IMR-90 (cell line): ENCODE measurements at regions of chr4 and their contacts with region 1.

Region 1: DNA sequence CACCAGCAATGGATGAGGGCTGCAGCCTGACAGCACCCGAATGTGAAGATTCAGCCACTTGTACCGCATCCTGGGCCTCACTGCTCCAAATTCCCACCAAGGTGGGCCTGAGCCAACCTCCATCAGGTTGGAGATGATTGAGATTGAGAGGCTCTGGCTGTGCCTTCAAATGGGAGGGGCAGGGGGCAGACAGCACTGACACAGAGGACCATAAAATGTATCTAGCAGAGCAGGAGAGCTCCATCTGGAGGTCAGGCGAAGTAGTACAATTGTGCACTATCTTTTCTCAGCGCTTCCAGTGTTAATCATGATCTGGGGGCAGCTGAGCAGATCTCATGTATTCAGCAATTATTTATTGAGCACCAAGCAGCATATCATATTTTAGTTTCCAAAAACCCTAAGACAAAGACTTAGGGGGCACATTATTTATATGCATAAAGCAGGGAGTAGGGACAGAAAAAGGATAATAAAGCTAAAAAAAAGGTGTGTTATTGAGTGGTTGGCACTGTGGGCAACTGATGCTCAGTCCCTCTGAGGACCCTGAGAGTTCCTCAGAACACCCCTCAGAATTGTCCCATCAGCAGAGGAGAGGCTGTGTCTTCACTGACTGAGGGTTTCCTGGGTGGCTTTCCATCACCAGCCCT is 31.6 kb upstream of the C1QTNF7 start:
- DNase-seq: peak; percentile 48
- ATAC-seq: peak; percentile 46; the same call in 1 of the 2 replicates
- H3K4me3 ChIP-seq: no peak overlapping the region
- H3K27ac ChIP-seq: no peak overlapping the region
- H3K4me1 ChIP-seq: peaks cover 14% of the 10 kb centered on the region
- H3K27me3 ChIP-seq: peaks cover 7% of the 10 kb centered on the region
- CTCF ChIP-seq: peak; percentile 62
- POLR2A ChIP-seq: no peak
- RAD21 ChIP-seq: peak; percentile 65

Region 2: GRCh38 chr4:15238720-15239119 is 157.6 kb before region 1 on chr4:
- CTCF ChIA-PET with region 1: interaction called, 3 read pairs
- POLR2A ChIA-PET with region 1: no interaction called
- dilution Hi-C with region 1: no loop called
- in situ Hi-C with region 1: no loop called
- intact Hi-C with region 1: loop called (anchors 1 kb)
- DNase-seq: peak; percentile 63
- ATAC-seq: peak; percentile 62
- H3K4me3 ChIP-seq: no peak overlapping the region
- H3K27ac ChIP-seq: no peak overlapping the region
- H3K4me1 ChIP-seq: peaks cover 15% of the 10 kb centered on the region
- H3K27me3 ChIP-seq: no peaks in the 10 kb centered on the region
- CTCF ChIP-seq: peak; percentile 89
- POLR2A ChIP-seq: no peak
- RAD21 ChIP-seq: peak; percentile 93

Region 3: DNA sequence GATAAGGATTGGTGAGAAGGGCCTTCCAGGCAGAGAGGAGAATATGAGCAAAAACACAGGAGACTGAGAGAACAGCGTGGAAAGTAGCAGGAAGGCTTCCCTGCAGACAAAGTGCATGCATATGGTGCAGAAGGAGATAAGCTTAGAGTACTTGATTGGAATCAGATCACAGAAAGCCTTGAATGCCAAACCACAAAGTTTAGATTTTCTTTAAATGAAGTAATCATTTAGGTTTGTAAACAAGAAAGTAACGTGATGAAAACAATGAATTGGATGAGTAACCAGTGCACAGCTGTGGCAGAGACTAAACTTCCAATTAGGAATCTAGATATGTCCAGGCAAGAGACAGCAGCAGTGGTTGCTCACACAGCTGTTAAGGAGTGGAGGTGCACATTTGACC is 52.2 kb before region 1 on chr4:
- CTCF ChIA-PET with region 1: interaction called, 3 read pairs
- POLR2A ChIA-PET with region 1: no interaction called
- dilution Hi-C with region 1: no loop called
- in situ Hi-C with region 1: no loop called
- intact Hi-C with region 1: loop called (anchors 5 kb)
- DNase-seq: peak; percentile 96
- ATAC-seq: peak; percentile 80
- H3K4me3 ChIP-seq: no peak overlapping the region
- H3K27ac ChIP-seq: peak overlapping the region; percentile 33; the same call in 1 of the 2 replicates
- H3K4me1 ChIP-seq: peaks cover 9% of the 10 kb centered on the region
- H3K27me3 ChIP-seq: peaks cover 10% of the 10 kb centered on the region
- CTCF ChIP-seq: no peak
- POLR2A ChIP-seq: no peak
- RAD21 ChIP-seq: no peak

Region 4: GRCh38 chr4:15438939-15439524 is 42.8 kb after region 1 on chr4:
- CTCF ChIA-PET with region 1: no interaction called
- POLR2A ChIA-PET with region 1: no interaction called
- dilution Hi-C with region 1: no loop called
- in situ Hi-C with region 1: no loop called
- intact Hi-C with region 1: loop called (anchors 1 kb)
- DNase-seq: peak; percentile 70
- ATAC-seq: peak; percentile 87
- H3K4me3 ChIP-seq: no peak overlapping the region
- H3K27ac ChIP-seq: no peak overlapping the region
- H3K4me1 ChIP-seq: peaks cover 3% of the 10 kb centered on the region
- H3K27me3 ChIP-seq: no peaks in the 10 kb centered on the region
- CTCF ChIP-seq: no peak
- POLR2A ChIP-seq: no peak
- RAD21 ChIP-seq: no peak

Region 5: DNA sequence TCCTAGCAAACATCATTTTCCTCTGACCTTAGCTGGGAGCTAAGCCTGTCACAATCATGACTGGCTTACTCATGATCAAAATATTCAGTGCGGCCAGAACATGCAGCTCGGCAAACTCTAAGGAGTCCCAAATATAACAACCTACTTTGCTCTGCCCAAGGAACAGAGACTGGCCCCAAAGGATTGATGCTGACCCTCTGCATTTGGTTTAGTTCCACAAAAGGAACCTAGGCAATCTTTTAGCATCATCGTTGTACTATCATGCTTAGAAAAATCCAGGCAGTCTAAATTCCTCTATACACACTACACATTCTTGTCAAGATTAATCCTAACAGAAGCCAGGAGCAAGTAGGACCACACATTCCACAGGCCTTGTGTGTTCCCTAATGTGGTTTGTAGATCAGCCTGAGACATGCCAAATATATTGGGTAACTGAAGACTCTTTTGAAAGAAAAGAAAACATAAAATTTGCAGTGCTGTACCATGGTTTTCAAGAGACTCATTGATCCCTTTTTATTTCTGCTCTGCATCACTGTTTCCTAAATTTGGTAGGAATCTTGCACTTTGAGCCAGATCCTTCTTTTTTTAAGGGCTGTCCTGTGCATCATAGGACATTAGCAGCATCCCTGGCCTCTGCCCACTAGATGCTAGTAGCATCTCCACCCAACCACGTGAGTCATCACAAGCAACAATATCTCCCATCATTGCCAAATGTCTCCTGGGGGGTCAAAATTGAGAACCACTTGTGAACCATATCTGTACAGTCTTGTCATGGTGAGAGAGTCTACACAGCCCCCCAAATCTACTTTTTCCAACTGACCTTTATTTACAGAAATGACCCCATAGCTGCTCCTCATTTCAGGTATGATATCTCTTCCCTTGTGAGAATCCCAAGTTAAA is 55.8 kb after region 1 on chr4:
- CTCF ChIA-PET with region 1: interaction called, 14 read pairs
- POLR2A ChIA-PET with region 1: interaction called, 3 read pairs
- dilution Hi-C with region 1: no loop called
- in situ Hi-C with region 1: no loop called
- intact Hi-C with region 1: loop called (anchors 1 kb)
- DNase-seq: peak; percentile 98
- ATAC-seq: peak; percentile 89
- H3K4me3 ChIP-seq: no peak overlapping the region
- H3K27ac ChIP-seq: peak overlapping the region; percentile 90
- H3K4me1 ChIP-seq: peaks cover 28% of the 10 kb centered on the region
- H3K27me3 ChIP-seq: no peaks in the 10 kb centered on the region
- CTCF ChIP-seq: no peak
- POLR2A ChIP-seq: no peak
- RAD21 ChIP-seq: no peak

Region 6: DNA sequence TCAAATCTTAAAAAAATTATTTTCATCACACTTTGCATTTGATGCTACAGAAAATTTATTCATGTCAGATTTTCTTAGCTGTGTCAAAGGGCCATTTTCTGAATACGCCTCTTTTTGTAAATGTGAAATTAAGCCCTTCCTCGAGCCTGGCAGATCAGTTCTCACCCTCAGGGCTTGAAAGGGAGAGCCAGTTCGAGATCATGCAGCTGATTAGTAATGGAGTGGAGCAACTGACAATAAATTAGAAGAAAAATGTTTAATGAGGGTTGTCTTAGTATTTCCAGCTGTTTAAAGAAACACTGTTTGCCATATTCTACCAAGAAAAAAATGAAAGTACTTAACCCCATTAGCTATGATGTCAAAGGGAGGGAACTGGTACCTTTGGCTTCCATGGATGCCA is 102.1 kb after region 1 on chr4:
- CTCF ChIA-PET with region 1: no interaction called
- POLR2A ChIA-PET with region 1: no interaction called
- dilution Hi-C with region 1: no loop called
- in situ Hi-C with region 1: no loop called
- intact Hi-C with region 1: no loop called
- DNase-seq: no peak
- ATAC-seq: no peak
- H3K4me3 ChIP-seq: no peak overlapping the region
- H3K27ac ChIP-seq: no peak overlapping the region
- H3K4me1 ChIP-seq: no peaks in the 10 kb centered on the region
- H3K27me3 ChIP-seq: no peaks in the 10 kb centered on the region
- CTCF ChIP-seq: no peak
- POLR2A ChIP-seq: no peak
- RAD21 ChIP-seq: no peak